ENCODE measurements at regions of chr19 and their contacts with region 1.

Region 1: DNA sequence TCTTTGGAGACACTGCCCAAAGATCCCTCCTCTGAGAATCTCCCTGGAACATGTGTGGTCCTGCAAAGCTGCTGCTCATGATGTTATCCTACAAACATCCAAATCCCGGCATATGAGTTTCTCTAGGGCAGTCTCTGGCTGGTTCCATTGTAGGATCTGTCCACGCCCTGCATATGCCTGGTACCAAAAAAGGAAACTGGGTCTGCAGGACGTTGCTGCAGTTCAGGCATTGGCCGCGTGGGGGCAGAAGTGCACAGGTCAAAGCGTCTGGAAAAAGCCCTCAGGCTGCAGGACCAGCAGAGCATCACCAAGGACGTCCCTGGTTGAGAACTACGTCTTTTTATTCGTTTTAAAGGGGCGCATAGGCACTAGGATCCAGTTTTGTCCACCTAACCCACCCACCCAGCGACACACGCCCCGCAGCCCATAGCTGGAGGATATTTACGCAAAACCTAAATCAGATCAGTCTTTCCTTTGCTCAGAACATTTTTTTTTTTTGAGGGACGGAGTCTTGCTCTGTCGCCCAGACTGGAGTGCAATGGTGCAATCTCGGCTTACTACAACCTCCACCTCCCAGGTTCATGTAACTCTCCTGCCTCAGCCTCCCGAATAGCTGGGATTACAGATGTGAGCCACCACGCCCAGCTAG is 12.9 kb upstream of the ZNF564 start:
- DNase-seq: peak; percentile 90 to 92
- H3K4me3 ChIP-seq: no peak overlapping the region
- H3K27ac ChIP-seq: no peak overlapping the region
- H3K4me1 ChIP-seq: no peaks in the 10 kb centered on the region
- H3K27me3 ChIP-seq: no peaks in the 10 kb centered on the region
- CTCF ChIP-seq: peak; percentile 85 to 97 (median 96)
- POLR2A ChIP-seq: no peak

Region 2: GRCh38 chr19:12666265-12667048 is 102.3 kb after region 1 on chr19 and contains the starts of genes MAN2B1 and WDR83:
- intact Hi-C with region 1: loop called (anchors 2 kb)
- DNase-seq: peak; percentile 71 to 77
- H3K4me3 ChIP-seq: peak within 1 kb of the TSS; percentile 24 to 88 (median 57)
- H3K27ac ChIP-seq: peak within 1 kb of the TSS in 2 of 3 donors; percentile 34 to 39
- H3K4me1 ChIP-seq: peaks cover 21 to 34% of the 10 kb centered on the region in 2 donors
- H3K27me3 ChIP-seq: no peaks in the 10 kb centered on the region
- CTCF ChIP-seq: peak in 1 of 6 experiments; percentile 11
- POLR2A ChIP-seq: peak in 1 of 2 donors; percentile 42
- total RNA-seq, gene MAN2B1: 38.0 to 106 (median 82.5) TPM
- total RNA-seq, gene WDR83: 9.5 to 17.5 (median 14.3) TPM

Region 3: GRCh38 chr19:12675940-12676339 is 111.8 kb after region 1 on chr19:
- intact Hi-C with region 1: loop called (anchors 2 kb)
- DNase-seq: no peak
- H3K4me3 ChIP-seq: no peak overlapping the region
- H3K27ac ChIP-seq: no peak overlapping the region
- H3K4me1 ChIP-seq: peaks cover 4 to 9% of the 10 kb centered on the region in 2 donors
- H3K27me3 ChIP-seq: no peaks in the 10 kb centered on the region
- CTCF ChIP-seq: no peak
- POLR2A ChIP-seq: no peak

Region 4: GRCh38 chr19:12847159-12848139 is 283.3 kb after region 1 on chr19:
- intact Hi-C with region 1: loop called (anchors 10 kb)
- DNase-seq: peak; percentile 87 to 88
- H3K4me3 ChIP-seq: peak overlapping the region in 1 of 3 donors; percentile 2
- H3K27ac ChIP-seq: no peak overlapping the region
- H3K4me1 ChIP-seq: peaks cover 0 to 8% of the 10 kb centered on the region in 2 donors
- H3K27me3 ChIP-seq: peaks cover 2% of the 10 kb centered on the region
- CTCF ChIP-seq: peak; percentile 80 to 99 (median 98)
- POLR2A ChIP-seq: no peak